Left colon (tissue), 2 donors: ENCODE measurements at regions of chr11 and their contacts with region 1.

Region 1: DNA sequence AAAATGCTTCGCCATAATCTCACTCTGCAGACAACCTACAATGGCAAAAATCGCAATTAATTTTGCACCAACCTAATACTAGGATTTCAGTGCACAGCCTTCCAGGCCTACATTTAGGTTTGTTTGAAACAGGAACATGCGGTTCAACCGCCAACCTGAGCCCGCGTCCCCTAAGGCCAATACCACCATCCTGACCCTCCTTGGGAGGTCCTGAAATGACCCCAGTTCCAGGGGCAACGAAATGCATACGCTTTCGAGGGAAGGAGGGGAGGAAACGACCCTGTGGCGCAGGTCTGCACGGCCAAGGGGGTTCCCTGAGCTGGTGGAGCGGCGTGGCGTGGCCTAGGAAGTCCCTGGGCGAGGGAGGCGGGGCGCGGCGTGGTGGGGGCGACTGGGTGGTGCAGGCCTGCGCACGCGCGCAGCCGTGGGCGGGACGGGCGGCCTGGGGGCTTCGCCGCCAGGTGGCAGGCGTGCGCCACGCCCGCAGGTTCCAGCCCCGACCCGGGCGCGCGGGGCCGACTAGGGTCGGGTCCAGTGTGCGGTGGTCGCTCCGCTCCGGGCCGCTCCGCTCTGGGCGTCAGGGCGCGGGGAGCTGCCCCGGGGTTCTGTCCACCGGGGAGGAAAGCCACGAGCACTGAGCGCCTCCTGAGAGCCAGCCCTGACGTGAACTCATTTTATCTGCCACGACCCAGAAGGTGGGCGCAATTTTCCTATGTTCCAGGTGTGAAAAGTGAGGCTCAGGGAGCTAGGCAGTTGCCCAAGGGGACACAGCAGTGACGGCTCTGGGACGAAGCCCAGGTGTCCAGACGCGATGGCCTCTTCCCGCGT is 94.1 kb downstream of the SWAP70 start:
- DNase-seq: peak; percentile 90 to 94
- ATAC-seq: peak; percentile 72

Region 2: DNA sequence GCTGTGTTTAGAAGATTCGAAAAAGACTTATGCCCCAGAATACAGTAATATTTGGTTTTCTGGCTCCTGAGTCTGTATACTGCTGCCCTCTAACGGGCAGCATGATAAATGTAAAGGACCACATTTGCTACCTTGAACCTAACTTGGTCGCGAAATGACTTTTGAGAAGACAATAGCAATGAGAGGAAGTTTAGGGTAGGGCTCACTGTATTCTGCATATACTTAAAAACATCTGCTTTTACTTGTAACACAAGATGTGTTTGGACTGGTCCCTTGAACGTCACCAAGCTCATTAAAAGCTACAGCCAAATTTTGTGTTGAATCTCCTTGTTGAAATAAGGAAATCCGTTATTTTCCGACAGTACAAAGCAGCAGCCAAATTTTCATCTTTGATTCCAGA is 215.0 kb after region 1 on chr11:
- intact Hi-C with region 1: loop called in 1 of 2 experiments (anchors 5 kb)
- DNase-seq: peak in 1 of 2 donors; percentile 11
- ATAC-seq: peak; percentile 67

Region 3: GRCh38 chr11:10307442-10308207 is 549.6 kb after region 1 on chr11:
- intact Hi-C with region 1: loop called in 1 of 2 experiments (anchors 5 kb)
- DNase-seq: peak; percentile 84 to 86
- ATAC-seq: peak; percentile 50